Left cardiac atrium (tissue), 4 donors: ENCODE measurements at regions of chr19 and their contacts with region 1.

Region 1: GRCh38 chr19:40598121-40598917 is 2.9 kb upstream of the LTBP4 start:
- DNase-seq: peak; percentile 87
- ATAC-seq: peak; percentile 62 to 64

Region 2: DNA sequence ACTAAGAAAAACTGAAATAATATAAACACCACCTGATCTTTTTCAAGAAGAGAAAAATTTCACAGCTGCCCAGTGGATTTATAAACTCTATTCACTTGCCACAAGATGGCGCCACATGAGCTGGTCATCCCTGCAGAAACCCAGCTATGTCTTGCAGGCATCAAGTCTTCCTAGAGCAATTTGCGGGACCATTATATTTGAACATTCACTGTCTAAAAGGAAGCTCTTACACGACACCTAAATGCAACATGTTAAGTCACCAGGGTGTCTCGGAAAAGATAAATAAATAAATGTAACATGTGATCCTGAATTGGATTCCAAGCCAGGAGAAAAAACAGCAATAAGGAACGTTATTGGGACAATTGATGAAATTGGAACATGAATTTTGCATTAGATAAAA is 292.9 kb before region 1 on chr19:
- intact Hi-C with region 1: loop called in 1 of 2 experiments (anchors 10 kb)
- DNase-seq: peak; percentile 76
- ATAC-seq: peak; percentile 76 to 84

Region 3: GRCh38 chr19:40529093-40529954 is 69.0 kb before region 1 on chr19:
- intact Hi-C with region 1: loop called (anchors 5 to 10 kb)
- DNase-seq: peak; percentile 88
- ATAC-seq: peak; percentile 91 to 92

Region 4: GRCh38 chr19:40549007-40549708 is 49.2 kb before region 1 on chr19:
- intact Hi-C with region 1: loop called in 1 of 2 experiments (anchors 5 kb)
- DNase-seq: peak; percentile 68
- ATAC-seq: peak; percentile 76 to 86